Prostate gland (tissue), 2 donors: ENCODE measurements at regions of chr4 and their contacts with region 1.

Region 1: DNA sequence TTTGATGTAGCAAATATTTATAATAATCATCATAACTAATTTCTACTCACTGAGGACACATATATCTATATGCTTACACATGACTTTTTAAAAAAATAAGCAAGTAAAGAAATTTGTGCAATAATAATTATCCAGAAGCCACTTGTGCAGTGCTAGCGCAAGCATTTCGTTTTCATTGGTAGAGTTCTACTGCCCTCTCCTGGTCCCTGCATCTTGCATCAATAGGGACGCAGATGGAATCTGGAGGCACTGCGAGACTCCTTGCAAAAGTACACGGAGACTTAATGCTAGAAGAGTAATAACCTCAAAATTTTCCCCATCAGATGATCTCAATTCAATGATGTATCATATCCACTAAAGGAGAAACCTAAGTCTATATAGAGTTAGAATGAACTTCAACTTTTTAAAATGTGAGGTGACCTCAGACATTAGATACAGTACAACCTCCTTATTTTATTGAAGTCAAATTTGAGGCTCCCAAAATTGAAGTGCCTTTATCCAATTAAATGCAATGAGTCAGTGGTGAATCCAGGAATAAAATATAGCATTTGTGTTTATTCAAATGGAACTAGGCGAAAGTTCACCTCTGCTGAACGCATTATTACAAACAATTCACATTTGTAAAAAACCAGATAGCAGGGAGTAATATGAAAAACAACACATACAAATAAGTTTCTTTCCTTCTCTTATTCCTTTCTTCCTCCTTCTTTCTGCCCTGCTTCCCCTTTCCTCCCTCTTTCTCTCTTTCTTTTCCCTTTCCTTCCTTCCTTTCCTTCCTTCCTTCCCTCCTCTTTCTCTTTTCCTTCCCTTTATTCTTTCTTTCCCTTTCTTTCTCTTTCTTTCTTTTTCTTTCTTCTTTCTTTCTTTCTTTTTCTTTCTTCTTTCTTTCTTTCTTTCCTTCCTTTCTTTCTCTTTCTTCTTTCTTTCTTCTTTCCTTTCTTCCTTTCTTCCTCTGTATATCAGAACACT is 450.0 kb downstream of the ANKRD50 start:
- DNase-seq: peak; percentile 59
- H3K4me3 ChIP-seq: no peak overlapping the region
- H3K27ac ChIP-seq: no peak overlapping the region
- H3K4me1 ChIP-seq: no peaks in the 10 kb centered on the region
- H3K27me3 ChIP-seq: no peaks in the 10 kb centered on the region
- CTCF ChIP-seq: peak; percentile 62 to 79 (median 72)
- POLR2A ChIP-seq: no peak

Region 2: GRCh38 chr4:123102897-123103471 is 1159.5 kb before region 1 on chr4:
- intact Hi-C with region 1: loop called (anchors 10 kb)
- DNase-seq: no peak
- H3K4me3 ChIP-seq: no peak overlapping the region
- H3K27ac ChIP-seq: no peak overlapping the region
- H3K4me1 ChIP-seq: no peaks in the 10 kb centered on the region
- H3K27me3 ChIP-seq: no peaks in the 10 kb centered on the region
- CTCF ChIP-seq: peak; percentile 58 to 81 (median 67)
- POLR2A ChIP-seq: no peak

Region 3: DNA sequence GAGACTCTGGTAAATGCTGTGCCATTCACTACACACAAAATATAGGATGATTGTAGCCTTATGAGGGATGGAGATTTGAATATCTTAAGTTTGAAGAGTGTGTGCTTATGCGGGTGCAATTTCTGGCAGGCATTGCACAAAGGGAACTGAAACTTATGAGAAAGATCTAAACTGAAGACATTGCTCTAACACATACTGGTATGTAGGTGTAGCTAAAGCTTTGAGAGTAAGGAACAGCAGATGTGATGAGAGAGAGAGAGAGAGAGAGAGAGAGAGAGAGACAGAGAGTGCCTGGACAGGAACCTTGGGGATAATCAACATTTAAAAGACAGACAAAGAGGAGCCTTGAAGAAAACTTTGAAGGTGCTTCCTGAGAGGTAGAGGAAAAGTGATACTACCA is 486.2 kb before region 1 on chr4:
- intact Hi-C with region 1: loop called (anchors 10 kb)
- DNase-seq: no peak
- H3K4me3 ChIP-seq: no peak overlapping the region
- H3K27ac ChIP-seq: no peak overlapping the region
- H3K4me1 ChIP-seq: no peaks in the 10 kb centered on the region
- H3K27me3 ChIP-seq: no peaks in the 10 kb centered on the region
- CTCF ChIP-seq: no peak
- POLR2A ChIP-seq: no peak

Region 4: DNA sequence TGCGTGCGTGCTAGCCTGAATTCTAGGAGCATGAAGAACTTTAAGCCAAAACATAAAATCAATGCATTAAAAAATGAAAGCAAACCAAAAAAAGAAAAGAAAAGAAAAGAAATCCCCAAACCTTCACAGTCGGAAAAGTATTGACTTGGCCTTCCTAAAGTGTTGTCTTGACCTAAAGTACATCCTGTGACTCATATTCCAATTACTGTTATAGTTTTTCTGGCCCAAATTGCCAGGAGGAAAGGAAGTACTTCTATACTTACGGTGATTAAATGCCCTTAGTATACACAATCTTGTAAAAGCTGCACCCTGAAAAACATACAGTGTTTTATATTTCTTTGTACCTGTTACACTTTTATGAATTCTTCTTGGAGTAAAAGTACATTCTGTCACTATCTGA is 62.7 kb before region 1 on chr4:
- intact Hi-C with region 1: no loop called
- DNase-seq: no peak
- H3K4me3 ChIP-seq: no peak overlapping the region
- H3K27ac ChIP-seq: no peak overlapping the region
- H3K4me1 ChIP-seq: no peaks in the 10 kb centered on the region
- H3K27me3 ChIP-seq: no peaks in the 10 kb centered on the region
- CTCF ChIP-seq: no peak
- POLR2A ChIP-seq: no peak

Region 5: GRCh38 chr4:124401606-124402005 is 139.1 kb after region 1 on chr4:
- intact Hi-C with region 1: no loop called
- DNase-seq: no peak
- H3K4me3 ChIP-seq: no peak overlapping the region
- H3K27ac ChIP-seq: no peak overlapping the region
- H3K4me1 ChIP-seq: no peaks in the 10 kb centered on the region
- H3K27me3 ChIP-seq: no peaks in the 10 kb centered on the region
- CTCF ChIP-seq: no peak
- POLR2A ChIP-seq: no peak

Region 6: DNA sequence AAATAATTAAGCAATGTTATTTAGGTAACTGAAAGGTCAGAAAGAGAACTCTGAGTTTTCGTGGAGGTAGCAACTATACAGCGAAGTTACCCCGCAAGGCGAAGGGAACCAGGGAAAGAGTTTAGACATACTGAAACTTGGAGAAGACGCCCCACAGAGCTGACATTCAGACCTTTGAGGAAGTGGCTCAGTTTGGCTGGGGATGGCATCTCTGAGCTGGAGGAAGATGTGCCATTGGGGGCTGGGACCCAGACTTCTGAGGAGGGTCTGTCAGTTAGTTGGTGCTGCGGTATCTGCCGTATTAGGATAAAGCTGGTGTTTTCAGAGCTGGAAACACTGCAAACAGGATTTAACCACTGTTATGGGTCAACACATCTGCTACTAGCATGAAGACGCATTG is 293.5 kb after region 1 on chr4:
- intact Hi-C with region 1: no loop called
- DNase-seq: no peak
- H3K4me3 ChIP-seq: no peak overlapping the region
- H3K27ac ChIP-seq: no peak overlapping the region
- H3K4me1 ChIP-seq: no peaks in the 10 kb centered on the region
- H3K27me3 ChIP-seq: no peaks in the 10 kb centered on the region
- CTCF ChIP-seq: no peak
- POLR2A ChIP-seq: no peak